ENCODE measurements at regions of chr6 and their contacts with region 1.

Region 1: GRCh38 chr6:157873735-157874344 is 50.8 kb downstream of the SNX9 start:
- DNase-seq: peak; percentile 85 to 87
- H3K4me3 ChIP-seq: no peak overlapping the region
- H3K27ac ChIP-seq: no peak overlapping the region
- H3K4me1 ChIP-seq: peaks cover 2 to 16% (median 5%) of the 10 kb centered on the region in 4 donors
- H3K27me3 ChIP-seq: no peaks in the 10 kb centered on the region
- CTCF ChIP-seq: peak in 5 of 7 experiments; percentile 41 to 79 (median 78)
- EP300 ChIP-seq: no peak
- POLR2A ChIP-seq: no peak

Region 2: GRCh38 chr6:157756708-157757429 is 117.0 kb before region 1 on chr6:
- intact Hi-C with region 1: loop called (anchors 5 kb)
- DNase-seq: peak; percentile 93 to 96
- H3K4me3 ChIP-seq: no peak overlapping the region
- H3K27ac ChIP-seq: peak overlapping the region in 3 of 5 donors; percentile 27 to 44 (median 31)
- H3K4me1 ChIP-seq: peaks cover 10 to 34% (median 27%) of the 10 kb centered on the region in 4 donors
- H3K27me3 ChIP-seq: no peaks in the 10 kb centered on the region
- CTCF ChIP-seq: peak in 5 of 7 experiments; percentile 72 to 90 (median 84)
- EP300 ChIP-seq: no peak
- POLR2A ChIP-seq: no peak

Region 3: DNA sequence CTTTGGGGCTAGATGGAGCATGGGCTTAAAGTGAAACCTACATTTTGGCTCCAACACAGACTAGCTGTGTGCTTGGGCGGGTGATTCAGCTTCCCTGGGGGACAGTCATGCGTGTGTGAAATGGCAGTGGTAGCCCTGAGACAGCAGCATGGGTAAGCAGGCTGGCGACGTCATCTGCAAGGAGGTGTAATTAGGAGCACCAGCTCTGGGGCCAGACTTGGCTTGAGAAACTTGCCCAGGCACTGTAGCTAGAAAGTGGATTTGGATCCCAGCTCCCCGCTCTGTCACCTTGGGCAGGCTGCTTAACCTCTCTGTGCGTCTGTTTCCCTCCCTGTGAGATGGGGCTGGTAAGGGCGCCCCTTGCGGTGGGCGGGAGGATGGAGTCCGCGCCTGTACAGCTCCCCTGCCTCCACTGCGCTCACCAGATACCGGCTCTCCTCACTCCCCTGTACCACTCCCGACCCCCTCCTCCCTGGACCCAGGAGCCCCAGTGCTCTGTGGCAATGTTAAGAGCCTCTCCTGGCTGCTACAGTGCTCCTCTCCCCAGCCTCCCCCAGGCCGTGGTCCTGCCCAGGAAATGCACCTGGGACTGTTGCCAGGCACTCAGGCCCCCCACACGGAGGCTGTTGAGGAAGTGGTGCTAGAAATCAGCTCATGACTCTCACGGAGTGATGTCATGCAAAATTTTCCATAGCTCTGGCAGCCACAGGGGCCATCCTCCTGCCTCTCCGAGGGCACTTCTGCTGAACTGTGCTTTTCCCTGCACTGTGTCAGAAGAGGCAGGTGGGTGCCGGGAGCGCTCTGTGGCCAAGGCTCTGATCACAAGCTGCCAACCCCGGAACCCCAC is 152.4 kb after region 1 on chr6:
- intact Hi-C with region 1: no loop called
- DNase-seq: peak; percentile 70 to 96
- H3K4me3 ChIP-seq: peak overlapping the region in 2 of 4 donors; percentile 7 to 18
- H3K27ac ChIP-seq: peak overlapping the region; percentile 47 to 82 (median 73)
- H3K4me1 ChIP-seq: peaks cover 33 to 54% (median 36%) of the 10 kb centered on the region in 4 donors
- H3K27me3 ChIP-seq: no peaks in the 10 kb centered on the region
- CTCF ChIP-seq: peak in 3 of 7 experiments; percentile 19 to 38 (median 23)
- EP300 ChIP-seq: no peak
- POLR2A ChIP-seq: no peak